Caco-2 (cell line): ENCODE measurements at regions of chr5 and their contacts with region 1.

Region 1: GRCh38 chr5:56951946-56952691 is at the start of gene MIER3:
- DNase-seq: peak; percentile 81 to 90
- H3K4me3 ChIP-seq: peak within 1 kb of the TSS; percentile 94
- H3K4me3 Mint-ChIP-seq: peak within 1 kb of the TSS; percentile 73
- H3K27ac Mint-ChIP-seq: peak within 1 kb of the TSS; percentile 72
- H3K4me1 ChIP-seq: peaks cover 25% of the 10 kb centered on the region
- H3K4me1 Mint-ChIP-seq: peaks cover 11% of the 10 kb centered on the region
- H3K27me3 ChIP-seq: no peaks in the 10 kb centered on the region
- H3K27me3 Mint-ChIP-seq: no peaks in the 10 kb centered on the region
- CTCF ChIP-seq: no peak
- total RNA-seq, gene MIER3: 52.7 and 54.0 TPM in 2 replicates

Region 2: DNA sequence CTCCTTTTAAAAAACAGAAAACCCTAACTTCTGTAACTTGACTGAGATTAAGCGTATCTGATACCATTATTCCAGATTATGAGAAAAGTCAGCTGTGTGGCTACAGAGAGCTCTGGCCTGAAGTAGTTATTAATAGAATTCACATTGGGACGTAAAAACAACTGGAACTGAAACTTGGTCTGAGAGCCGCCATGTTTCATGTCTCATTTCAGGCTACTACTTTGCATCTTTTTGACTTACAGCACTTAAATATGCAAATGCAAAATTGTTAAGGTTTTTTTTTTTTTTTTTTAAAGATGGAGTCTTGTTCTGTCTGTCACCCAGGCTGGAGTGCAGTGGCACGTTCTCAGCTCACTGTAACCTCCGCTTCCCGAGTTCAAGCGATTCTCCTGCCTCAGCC is 111.5 kb before region 1 on chr5:
- CTCF ChIA-PET with region 1: no interaction called
- POLR2A ChIA-PET with region 1: no interaction called
- intact Hi-C with region 1: no loop called
- DNase-seq: no peak
- H3K4me3 ChIP-seq: no peak overlapping the region
- H3K4me3 Mint-ChIP-seq: no peak overlapping the region
- H3K27ac Mint-ChIP-seq: no peak overlapping the region
- H3K4me1 ChIP-seq: peaks cover 41% of the 10 kb centered on the region
- H3K4me1 Mint-ChIP-seq: peaks cover 28% of the 10 kb centered on the region
- H3K27me3 ChIP-seq: no peaks in the 10 kb centered on the region
- H3K27me3 Mint-ChIP-seq: no peaks in the 10 kb centered on the region
- CTCF ChIP-seq: no peak

Region 3: DNA sequence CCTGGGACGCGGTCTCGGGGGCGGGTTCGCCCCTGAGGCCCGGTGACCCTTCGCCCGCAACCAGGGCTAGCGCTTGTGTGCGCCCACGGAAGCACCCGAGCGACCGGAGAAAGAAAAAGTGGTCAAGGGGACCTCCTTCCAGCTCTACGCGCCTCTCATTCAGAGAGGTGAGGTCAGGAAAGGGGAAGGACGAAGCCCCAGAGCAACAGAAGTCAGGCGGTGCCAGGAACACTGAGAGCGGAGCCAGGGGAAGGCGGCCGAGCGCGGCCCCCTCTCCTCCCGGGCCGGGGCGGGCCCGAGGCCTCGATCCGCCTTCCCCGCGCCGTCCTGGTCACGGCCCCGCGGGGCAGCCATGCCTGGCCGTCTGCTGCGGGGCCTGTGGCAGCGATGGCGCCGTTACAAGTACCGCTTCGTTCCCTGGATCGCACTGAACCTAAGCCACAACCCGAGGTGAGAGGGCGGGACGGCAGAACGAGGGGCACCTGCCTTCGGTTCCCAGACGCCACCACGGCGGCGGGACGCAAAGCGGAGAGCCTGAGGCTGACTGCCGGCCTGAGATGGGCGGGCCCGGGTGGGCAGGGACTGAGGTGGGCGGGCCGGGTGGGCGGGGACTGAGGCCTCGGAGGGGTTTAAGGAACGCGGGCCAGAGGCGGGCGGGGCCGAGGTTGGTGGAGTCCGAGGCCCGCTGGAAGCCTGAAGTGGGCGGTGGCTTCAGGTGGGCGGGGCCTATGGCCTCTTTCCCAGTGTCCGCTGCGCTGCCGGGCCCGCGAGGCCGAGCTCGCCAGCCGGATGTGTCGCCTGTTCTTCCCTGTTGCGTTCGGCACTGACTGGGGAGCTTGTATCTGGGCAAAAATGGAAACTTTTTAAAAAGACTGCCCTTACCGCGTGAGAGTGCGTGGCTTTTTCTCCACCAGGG is 42.6 kb before region 1 on chr5 and contains the start of gene SETD9:
- CTCF ChIA-PET with region 1: interaction called, 4 read pairs
- POLR2A ChIA-PET with region 1: interaction called, 5 read pairs
- intact Hi-C with region 1: loop called (anchors 2 kb)
- DNase-seq: peak; percentile 97 to 99
- H3K4me3 ChIP-seq: peak within 1 kb of the TSS; percentile 85
- H3K4me3 Mint-ChIP-seq: peak within 1 kb of the TSS; percentile 96
- H3K27ac Mint-ChIP-seq: peak within 1 kb of the TSS; percentile 94
- H3K4me1 ChIP-seq: no peaks in the 10 kb centered on the region
- H3K4me1 Mint-ChIP-seq: no peaks in the 10 kb centered on the region
- H3K27me3 ChIP-seq: no peaks in the 10 kb centered on the region
- H3K27me3 Mint-ChIP-seq: no peaks in the 10 kb centered on the region
- CTCF ChIP-seq: no peak
- total RNA-seq, gene SETD9: 10.5 and 13.1 TPM in 2 replicates

Region 4: GRCh38 chr5:56977021-56977420 is 24.9 kb after region 1 on chr5:
- CTCF ChIA-PET with region 1: no interaction called
- POLR2A ChIA-PET with region 1: no interaction called
- intact Hi-C with region 1: loop called (anchors 1 kb)
- DNase-seq: no peak
- H3K4me3 ChIP-seq: no peak overlapping the region
- H3K4me3 Mint-ChIP-seq: no peak overlapping the region
- H3K27ac Mint-ChIP-seq: no peak overlapping the region
- H3K4me1 ChIP-seq: peaks cover 38% of the 10 kb centered on the region
- H3K4me1 Mint-ChIP-seq: peaks cover 24% of the 10 kb centered on the region
- H3K27me3 ChIP-seq: no peaks in the 10 kb centered on the region
- H3K27me3 Mint-ChIP-seq: no peaks in the 10 kb centered on the region
- CTCF ChIP-seq: no peak

Region 5: GRCh38 chr5:57032151-57032551 is 80.0 kb after region 1 on chr5:
- CTCF ChIA-PET with region 1: no interaction called
- POLR2A ChIA-PET with region 1: no interaction called
- intact Hi-C with region 1: no loop called
- DNase-seq: no peak
- H3K4me3 ChIP-seq: no peak overlapping the region
- H3K4me3 Mint-ChIP-seq: no peak overlapping the region
- H3K27ac Mint-ChIP-seq: no peak overlapping the region
- H3K4me1 ChIP-seq: no peaks in the 10 kb centered on the region; the same call in 1 of the 2 replicates
- H3K4me1 Mint-ChIP-seq: peaks cover 7% of the 10 kb centered on the region
- H3K27me3 ChIP-seq: no peaks in the 10 kb centered on the region
- H3K27me3 Mint-ChIP-seq: no peaks in the 10 kb centered on the region
- CTCF ChIP-seq: no peak

Region 6: GRCh38 chr5:57173185-57174127 is 221.3 kb after region 1 on chr5 and contains the start of gene GPBP1:
- CTCF ChIA-PET with region 1: no interaction called
- POLR2A ChIA-PET with region 1: interaction called, 4 read pairs
- intact Hi-C with region 1: loop called (anchors 2 kb)
- DNase-seq: peak; percentile 98 to 99
- H3K4me3 ChIP-seq: peak within 1 kb of the TSS; percentile 98
- H3K4me3 Mint-ChIP-seq: peak within 1 kb of the TSS; percentile 97
- H3K27ac Mint-ChIP-seq: peak within 1 kb of the TSS; percentile 99
- H3K4me1 ChIP-seq: peaks cover 8% of the 10 kb centered on the region; the same call in 1 of the 2 replicates
- H3K4me1 Mint-ChIP-seq: no peaks in the 10 kb centered on the region
- H3K27me3 ChIP-seq: no peaks in the 10 kb centered on the region
- H3K27me3 Mint-ChIP-seq: no peaks in the 10 kb centered on the region
- CTCF ChIP-seq: no peak
- total RNA-seq, gene GPBP1: 100 and 117 TPM in 2 replicates